Breast epithelium (tissue), 4 donors: ENCODE measurements at regions of chr14 and their contacts with region 1.

Region 1: GRCh38 chr14:24332268-24332993 is 2.4 kb downstream of the ADCY4 start:
- DNase-seq: peak; percentile 72 to 77
- H3K4me3 ChIP-seq: peak overlapping the region; percentile 10 to 64 (median 47)
- H3K27ac ChIP-seq: peak overlapping the region in 1 of 2 donors; percentile 12
- H3K4me1 ChIP-seq: peaks cover 5 to 6% of the 10 kb centered on the region in 2 donors
- H3K27me3 ChIP-seq: peaks cover 0 to 11% of the 10 kb centered on the region in 2 donors
- CTCF ChIP-seq: peak; percentile 57 to 89 (median 81)
- POLR2A ChIP-seq: no peak

Region 2: GRCh38 chr14:23020143-23021128 is 1312.0 kb before region 1 on chr14:
- intact Hi-C with region 1: no loop called
- DNase-seq: no peak
- H3K4me3 ChIP-seq: no peak overlapping the region
- H3K27ac ChIP-seq: no peak overlapping the region
- H3K4me1 ChIP-seq: no peaks in the 10 kb centered on the region
- H3K27me3 ChIP-seq: no peaks in the 10 kb centered on the region
- CTCF ChIP-seq: no peak
- POLR2A ChIP-seq: no peak

Region 3: GRCh38 chr14:24366721-24367513 is 34.5 kb after region 1 on chr14:
- intact Hi-C with region 1: loop called (anchors 5 kb)
- DNase-seq: peak; percentile 90 to 92
- H3K4me3 ChIP-seq: peak overlapping the region; percentile 65 to 84 (median 67)
- H3K27ac ChIP-seq: peak overlapping the region; percentile 93
- H3K4me1 ChIP-seq: peaks cover 4 to 5% of the 10 kb centered on the region in 2 donors
- H3K27me3 ChIP-seq: no peaks in the 10 kb centered on the region
- CTCF ChIP-seq: no peak
- POLR2A ChIP-seq: peak; percentile 51